Sciatic nerve (tissue), 2 donors: ENCODE measurements at regions of chr3 and their contacts with region 1.

Region 1: GRCh38 chr3:145326666-145327065 is 834.3 kb downstream of the PLOD2 start:
- DNase-seq: no peak
- ATAC-seq: no peak

Region 2: GRCh38 chr3:144142151-144142840 is 1184.4 kb before region 1 on chr3:
- intact Hi-C with region 1: loop called (anchors 5 kb)
- DNase-seq: no peak
- ATAC-seq: peak; percentile 26

Region 3: GRCh38 chr3:145229652-145230051 is 97.0 kb before region 1 on chr3:
- intact Hi-C with region 1: no loop called
- DNase-seq: no peak
- ATAC-seq: no peak